ENCODE measurements at regions of chr11 and their contacts with region 1.

Region 1: DNA sequence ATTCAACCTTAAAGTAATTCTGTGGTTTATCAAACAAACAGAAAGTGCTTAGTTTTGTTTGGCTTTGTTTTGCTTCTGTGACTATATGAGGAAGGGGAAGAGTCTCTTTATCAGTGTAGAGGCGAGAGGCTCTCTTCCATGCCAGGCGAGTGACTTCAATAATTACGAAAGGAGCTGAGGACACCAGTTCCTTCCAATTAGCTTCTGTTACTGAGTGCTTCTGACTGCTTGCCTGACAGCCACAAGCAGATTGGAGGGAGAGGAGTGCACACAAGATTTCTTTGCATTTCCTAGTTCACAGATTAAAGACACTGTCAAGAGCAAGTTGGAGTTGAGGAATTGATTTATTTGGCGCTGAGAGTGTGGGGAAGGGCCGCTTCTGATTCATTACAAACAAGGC is 1484.5 kb upstream of the TENM4 start:
- DNase-seq: no peak
- ATAC-seq: no peak
- H3K4me3 ChIP-seq: no peak overlapping the region
- H3K27ac ChIP-seq: no peak overlapping the region
- H3K4me1 ChIP-seq: no peaks in the 10 kb centered on the region
- H3K27me3 ChIP-seq: no peaks in the 10 kb centered on the region

Region 2: DNA sequence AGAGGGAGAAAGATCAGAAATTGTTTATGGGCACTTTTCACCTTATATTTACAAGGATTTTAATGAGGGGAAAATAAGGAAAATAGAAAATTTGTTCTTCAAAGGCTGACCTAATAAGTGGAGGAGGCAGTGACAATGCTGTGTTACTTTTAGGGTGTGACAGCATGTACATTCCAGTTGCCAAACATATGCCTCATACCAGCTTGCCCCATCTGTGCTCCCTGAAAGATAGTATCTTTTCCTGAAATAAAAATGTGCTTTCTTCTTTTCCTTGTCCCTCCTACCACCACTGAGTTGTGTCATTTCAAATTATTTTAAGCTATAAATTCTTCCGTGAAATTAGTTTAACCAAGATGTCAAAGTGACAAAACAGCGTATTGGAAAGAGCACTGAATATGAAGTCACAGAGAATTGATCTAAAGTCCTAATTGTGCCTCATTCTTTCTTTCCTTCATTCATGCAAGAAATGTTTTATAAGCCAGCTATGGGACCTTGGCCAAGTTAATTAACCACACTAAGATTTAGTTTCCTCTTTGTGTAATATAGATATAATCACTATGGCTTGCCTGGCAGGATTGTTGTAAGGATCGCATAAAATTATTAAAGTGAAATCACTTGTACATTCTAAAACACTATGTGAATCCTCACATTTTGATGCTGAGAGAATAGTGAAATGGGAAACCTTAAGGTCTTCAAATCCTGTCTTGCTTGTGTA is 177.0 kb before region 1 on chr11:
- intact Hi-C with region 1: no loop called
- DNase-seq: no peak
- ATAC-seq: no peak
- H3K4me3 ChIP-seq: no peak overlapping the region
- H3K27ac ChIP-seq: no peak overlapping the region
- H3K4me1 ChIP-seq: no peaks in the 10 kb centered on the region
- H3K27me3 ChIP-seq: no peaks in the 10 kb centered on the region

Region 3: DNA sequence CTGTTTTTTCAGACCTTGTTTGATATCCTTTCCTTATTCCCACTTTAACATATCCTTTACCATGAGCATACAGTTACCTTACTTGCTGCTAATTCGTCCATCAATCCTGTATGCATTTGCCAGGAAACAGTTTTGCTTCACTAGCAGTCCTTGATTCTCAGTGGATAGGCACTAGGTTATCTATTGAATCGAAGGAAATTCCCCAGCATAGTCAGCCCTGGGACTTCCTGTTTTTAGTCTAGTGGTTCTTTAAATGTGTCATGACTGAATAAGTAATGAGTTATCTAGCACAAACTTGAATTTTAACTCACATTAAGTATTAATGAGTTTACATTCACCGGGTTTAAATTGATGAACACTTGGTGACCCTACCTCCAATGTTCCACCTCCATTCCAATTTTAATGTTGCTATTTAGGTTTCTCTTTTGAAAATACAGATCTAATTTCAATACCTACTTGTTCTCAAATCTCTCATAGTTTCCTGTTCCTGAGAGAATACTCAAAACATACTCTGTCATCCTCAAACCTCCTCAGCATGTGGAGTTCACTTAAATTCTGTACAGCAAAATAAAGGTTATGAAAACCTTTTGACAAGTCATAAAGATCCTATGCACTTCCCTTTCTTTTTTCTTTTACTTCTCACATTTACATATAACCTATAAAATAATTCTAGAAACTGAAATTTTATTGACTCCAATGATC is 109.4 kb before region 1 on chr11:
- intact Hi-C with region 1: no loop called
- DNase-seq: no peak
- ATAC-seq: no peak
- H3K4me3 ChIP-seq: no peak overlapping the region
- H3K27ac ChIP-seq: no peak overlapping the region
- H3K4me1 ChIP-seq: no peaks in the 10 kb centered on the region
- H3K27me3 ChIP-seq: no peaks in the 10 kb centered on the region

Region 4: DNA sequence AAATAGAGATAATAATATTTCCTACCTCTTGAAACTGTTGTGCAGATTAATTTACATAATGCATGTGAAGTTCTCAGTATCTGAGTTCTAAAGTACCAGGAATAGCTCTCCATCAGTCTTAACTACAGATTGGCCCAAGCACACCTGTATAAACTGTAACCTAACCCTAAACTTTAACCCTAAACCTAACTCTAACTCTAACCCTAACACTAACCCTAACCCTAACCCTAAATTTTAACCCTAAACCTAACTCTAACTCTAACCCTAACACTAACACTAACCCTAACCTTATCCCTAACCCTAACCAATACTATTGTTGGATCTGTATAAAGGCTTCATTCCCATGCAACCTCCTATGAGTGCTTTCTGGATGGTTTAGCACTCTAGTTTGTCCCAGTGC is 38.6 kb before region 1 on chr11:
- intact Hi-C with region 1: no loop called
- DNase-seq: no peak
- ATAC-seq: no peak
- H3K4me3 ChIP-seq: no peak overlapping the region
- H3K27ac ChIP-seq: no peak overlapping the region
- H3K4me1 ChIP-seq: no peaks in the 10 kb centered on the region
- H3K27me3 ChIP-seq: no peaks in the 10 kb centered on the region

Region 5: GRCh38 chr11:80993536-80993935 is 68.2 kb after region 1 on chr11:
- intact Hi-C with region 1: loop called in 1 of 2 experiments (anchors 10 kb)
- DNase-seq: no peak
- ATAC-seq: no peak
- H3K4me3 ChIP-seq: no peak overlapping the region
- H3K27ac ChIP-seq: no peak overlapping the region
- H3K4me1 ChIP-seq: no peaks in the 10 kb centered on the region
- H3K27me3 ChIP-seq: no peaks in the 10 kb centered on the region